ENCODE measurements at regions of chrX and their contacts with region 1.

Region 1: DNA sequence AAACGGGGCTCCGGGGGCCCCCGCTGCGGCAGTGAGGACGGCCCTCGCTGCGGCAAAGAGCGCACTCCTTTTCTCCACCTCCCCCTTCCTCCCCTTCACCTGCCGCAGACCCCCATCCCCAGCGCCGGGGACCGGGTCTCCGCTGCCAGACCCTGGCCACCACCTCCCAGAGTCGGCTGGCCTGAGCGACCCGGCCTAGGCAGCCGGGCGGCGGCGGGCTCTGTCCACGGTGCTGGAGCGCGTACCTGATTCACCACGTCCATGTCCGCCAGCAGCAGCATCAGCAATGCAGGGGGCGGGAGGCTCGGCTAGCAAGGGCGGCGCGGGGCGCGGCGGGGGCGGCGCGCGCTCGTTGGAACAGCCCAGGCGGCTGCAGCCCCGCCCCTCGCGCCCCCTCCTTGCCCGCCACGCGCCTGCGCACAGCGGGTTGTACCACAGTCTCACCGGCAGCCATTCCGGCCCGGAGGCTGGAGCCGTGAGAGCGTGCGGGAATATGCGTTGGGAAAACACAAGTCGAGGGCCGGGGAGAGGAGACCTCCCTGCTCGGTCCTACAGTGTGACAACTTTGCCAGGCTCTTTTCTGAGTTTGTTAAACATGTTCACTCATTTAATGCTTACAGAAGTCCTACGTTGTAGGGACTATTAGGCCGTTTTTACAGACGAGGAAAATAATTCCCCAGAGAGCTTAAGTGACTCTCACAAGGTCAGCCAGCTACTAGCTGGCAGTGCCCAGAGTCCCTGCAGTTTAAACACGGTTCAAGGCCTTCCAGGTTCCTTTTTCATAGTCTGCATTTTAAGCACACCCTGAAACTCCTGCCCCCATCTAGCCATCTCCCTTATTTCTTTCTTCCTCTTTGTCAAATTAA is at the start of gene SYP:
- DNase-seq: peak; percentile 48
- H3K4me3 ChIP-seq: peak within 1 kb of the TSS in 3 of 4 donors; percentile 21 to 58 (median 35)
- H3K27ac ChIP-seq: peak within 1 kb of the TSS in 3 of 4 donors; percentile 54 to 66 (median 55)
- H3K4me1 ChIP-seq: peaks cover 0 to 8% (median 3%) of the 10 kb centered on the region in 3 donors
- H3K27me3 ChIP-seq: no peaks in the 10 kb centered on the region
- CTCF ChIP-seq: peak in 1 of 6 experiments; percentile 26
- POLR2A ChIP-seq: peak in 3 of 4 donors; percentile 52 to 66 (median 63)
- total RNA-seq, gene SYP: 0.15 to 0.57 (median 0.37) TPM

Region 2: GRCh38 chrX:49139713-49140112 is 60.4 kb before region 1 on chrX:
- intact Hi-C with region 1: no loop called
- DNase-seq: no peak
- H3K4me3 ChIP-seq: no peak overlapping the region
- H3K27ac ChIP-seq: no peak overlapping the region
- H3K4me1 ChIP-seq: no peaks in the 10 kb centered on the region
- H3K27me3 ChIP-seq: no peaks in the 10 kb centered on the region
- CTCF ChIP-seq: no peak
- POLR2A ChIP-seq: no peak

Region 3: GRCh38 chrX:49269010-49269767 is 69.0 kb after region 1 on chrX:
- intact Hi-C with region 1: loop called (anchors 5 kb)
- DNase-seq: peak; percentile 84
- H3K4me3 ChIP-seq: peak overlapping the region; percentile 58 to 81 (median 68)
- H3K27ac ChIP-seq: peak overlapping the region; percentile 94 to 97 (median 96)
- H3K4me1 ChIP-seq: peaks cover 18 to 41% (median 25%) of the 10 kb centered on the region in 3 donors
- H3K27me3 ChIP-seq: no peaks in the 10 kb centered on the region
- CTCF ChIP-seq: no peak
- POLR2A ChIP-seq: peak in 2 of 4 donors; percentile 43 to 74